ENCODE measurements at regions of chr16 and their contacts with region 1.

Region 1: DNA sequence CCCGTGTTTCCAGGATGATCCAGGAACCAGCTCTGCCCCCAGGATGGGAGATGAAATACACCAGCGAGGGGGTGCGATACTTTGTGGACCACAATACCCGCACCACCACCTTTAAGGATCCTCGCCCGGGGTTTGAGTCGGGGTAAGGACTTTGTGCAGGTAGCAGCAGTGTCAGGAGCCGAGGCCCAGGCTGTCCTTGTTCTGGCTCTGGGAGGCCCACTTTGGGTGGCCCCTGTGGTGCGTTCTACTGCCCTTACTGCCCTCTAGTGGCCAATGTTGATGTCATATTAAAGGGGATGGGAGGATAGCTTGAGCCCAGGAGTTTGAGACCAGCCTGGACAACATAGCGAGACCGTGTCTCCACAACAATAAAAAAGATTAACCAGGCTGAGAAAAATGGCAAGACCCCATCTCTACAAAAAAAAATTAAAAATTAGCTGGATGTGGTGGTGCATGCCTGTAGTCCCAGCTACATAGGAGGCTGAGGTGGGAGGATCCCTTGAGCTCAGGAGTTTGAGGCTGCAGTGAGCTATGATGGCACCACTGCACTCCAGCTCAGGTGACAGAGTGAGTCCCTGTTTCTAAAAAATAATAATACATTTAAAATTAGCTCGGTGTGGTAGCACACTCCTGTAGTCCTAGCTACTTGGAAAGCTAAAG is 20.9 kb upstream of the CLEC18A start:
- DNase-seq: peak; percentile 59 to 82
- ATAC-seq: peak; percentile 81 to 96
- H3K4me3 ChIP-seq: no peak overlapping the region
- H3K27ac ChIP-seq: 0 out of 6 replicates have a peak overlapping the region, but pooled peaks of 1 of the 2 experiments have one; percentile 42
- H3K4me1 ChIP-seq: no peaks in the 10 kb centered on the region
- CTCF ChIP-seq: peak; percentile 85
- EP300 ChIP-seq: no peak
- POLR2A ChIP-seq: no peak
- RAD21 ChIP-seq: peak; percentile 82 to 85

Region 2: GRCh38 chr16:69787883-69788282 is 142.4 kb before region 1 on chr16:
- CTCF ChIA-PET with region 1: interaction called, 15 read pairs
- POLR2A ChIA-PET with region 1: no interaction called
- DNase-seq: no peak
- ATAC-seq: no peak
- H3K4me3 ChIP-seq: no peak overlapping the region
- H3K27ac ChIP-seq: no peak overlapping the region
- H3K4me1 ChIP-seq: no peaks in the 10 kb centered on the region
- CTCF ChIP-seq: no peak
- EP300 ChIP-seq: no peak
- POLR2A ChIP-seq: no peak
- RAD21 ChIP-seq: no peak

Region 3: DNA sequence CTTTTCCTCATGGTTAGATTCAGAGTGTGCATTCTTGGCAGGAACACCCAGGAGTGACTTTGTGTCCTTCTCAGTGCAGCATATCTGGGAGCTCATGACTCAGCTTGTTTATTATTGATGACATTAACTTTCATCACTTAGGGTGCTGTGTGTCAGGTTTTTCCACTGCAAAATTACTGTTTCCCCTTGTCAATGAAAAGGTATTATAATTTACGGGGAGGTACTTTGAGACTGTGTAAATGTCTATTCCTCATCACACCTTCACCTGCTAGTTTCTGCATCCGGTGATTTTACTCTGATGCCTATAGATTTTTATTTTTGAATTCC is 117.6 kb before region 1 on chr16:
- CTCF ChIA-PET with region 1: interaction called, 10 read pairs
- POLR2A ChIA-PET with region 1: no interaction called
- DNase-seq: peak; percentile 36 to 37
- ATAC-seq: peak; percentile 74 to 81
- H3K4me3 ChIP-seq: no peak overlapping the region
- H3K27ac ChIP-seq: peak overlapping the region; percentile 71 to 83
- H3K4me1 ChIP-seq: peaks cover 36% of the 10 kb centered on the region
- CTCF ChIP-seq: no peak
- EP300 ChIP-seq: no peak
- POLR2A ChIP-seq: no peak
- RAD21 ChIP-seq: no peak

Region 4: DNA sequence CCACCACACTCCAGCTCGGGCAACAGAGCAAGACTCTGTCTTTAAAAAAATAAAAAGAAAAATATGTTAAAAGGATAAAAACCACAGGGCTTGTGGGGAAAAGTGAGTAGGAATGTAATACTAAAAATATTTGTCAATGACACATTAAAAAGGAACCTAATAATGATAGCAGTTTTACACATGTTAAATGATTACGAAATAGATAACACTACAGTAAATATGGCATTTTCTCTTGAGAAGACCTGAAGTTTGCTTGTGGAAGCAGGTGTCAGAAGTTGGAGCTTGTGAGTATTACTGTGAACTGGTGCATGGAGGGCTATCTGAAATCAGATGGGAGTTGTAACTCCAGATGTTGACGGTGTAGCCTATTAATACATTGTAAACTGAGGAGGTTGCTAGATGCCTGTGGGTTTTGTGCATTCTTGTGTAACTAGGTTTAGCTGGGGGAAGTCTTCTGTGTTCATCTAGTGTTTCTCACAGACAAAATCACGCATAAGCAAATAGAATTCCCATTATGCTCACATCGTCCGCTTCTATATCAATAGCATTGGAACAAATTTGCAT is 23.3 kb before region 1 on chr16:
- CTCF ChIA-PET with region 1: interaction called, 19 read pairs
- POLR2A ChIA-PET with region 1: no interaction called
- DNase-seq: no peak
- ATAC-seq: no peak
- H3K4me3 ChIP-seq: no peak overlapping the region
- H3K27ac ChIP-seq: no peak overlapping the region
- H3K4me1 ChIP-seq: peaks cover 3% of the 10 kb centered on the region; the same call in 1 of the 3 replicates
- CTCF ChIP-seq: no peak
- EP300 ChIP-seq: no peak
- POLR2A ChIP-seq: no peak
- RAD21 ChIP-seq: no peak

Region 5: GRCh38 chr16:69917739-69918138 is 12.5 kb before region 1 on chr16:
- CTCF ChIA-PET with region 1: interaction called, 50 read pairs
- POLR2A ChIA-PET with region 1: no interaction called
- DNase-seq: peak; percentile 71 to 87
- ATAC-seq: peak; percentile 96 to 98
- H3K4me3 ChIP-seq: peak overlapping the region; percentile 1; the same call in 1 of the 3 replicates
- H3K27ac ChIP-seq: peak overlapping the region; percentile 59 to 84
- H3K4me1 ChIP-seq: peaks cover 21% of the 10 kb centered on the region
- CTCF ChIP-seq: no peak
- EP300 ChIP-seq: peak in 1 of 2 experiments; percentile 60; a peak in 1 of 5 replicates
- POLR2A ChIP-seq: no peak
- RAD21 ChIP-seq: peak in 1 of 2 experiments; percentile 22; a peak in 1 of 5 replicates